CD4-positive, alpha-beta T cell (primary cell): ENCODE measurements at regions of chr5 and their contacts with region 1.

Region 1: GRCh38 chr5:15003511-15003920 is 131.9 kb upstream of the ANKH start:
- DNase-seq: peak; percentile 23 to 84 (median 40)
- ATAC-seq: peak; percentile 100
- H3K4me3 ChIP-seq: no peak overlapping the region
- H3K4me3 Mint-ChIP-seq: no peak overlapping the region
- H3K27ac ChIP-seq: no peak overlapping the region
- H3K27ac Mint-ChIP-seq: no peak overlapping the region
- H3K4me1 ChIP-seq: no peaks in the 10 kb centered on the region
- H3K4me1 Mint-ChIP-seq: peaks cover 6% of the 10 kb centered on the region
- H3K27me3 ChIP-seq: no peaks in the 10 kb centered on the region
- H3K27me3 Mint-ChIP-seq: no peaks in the 10 kb centered on the region
- CTCF ChIP-seq: peak; percentile 81

Region 2: DNA sequence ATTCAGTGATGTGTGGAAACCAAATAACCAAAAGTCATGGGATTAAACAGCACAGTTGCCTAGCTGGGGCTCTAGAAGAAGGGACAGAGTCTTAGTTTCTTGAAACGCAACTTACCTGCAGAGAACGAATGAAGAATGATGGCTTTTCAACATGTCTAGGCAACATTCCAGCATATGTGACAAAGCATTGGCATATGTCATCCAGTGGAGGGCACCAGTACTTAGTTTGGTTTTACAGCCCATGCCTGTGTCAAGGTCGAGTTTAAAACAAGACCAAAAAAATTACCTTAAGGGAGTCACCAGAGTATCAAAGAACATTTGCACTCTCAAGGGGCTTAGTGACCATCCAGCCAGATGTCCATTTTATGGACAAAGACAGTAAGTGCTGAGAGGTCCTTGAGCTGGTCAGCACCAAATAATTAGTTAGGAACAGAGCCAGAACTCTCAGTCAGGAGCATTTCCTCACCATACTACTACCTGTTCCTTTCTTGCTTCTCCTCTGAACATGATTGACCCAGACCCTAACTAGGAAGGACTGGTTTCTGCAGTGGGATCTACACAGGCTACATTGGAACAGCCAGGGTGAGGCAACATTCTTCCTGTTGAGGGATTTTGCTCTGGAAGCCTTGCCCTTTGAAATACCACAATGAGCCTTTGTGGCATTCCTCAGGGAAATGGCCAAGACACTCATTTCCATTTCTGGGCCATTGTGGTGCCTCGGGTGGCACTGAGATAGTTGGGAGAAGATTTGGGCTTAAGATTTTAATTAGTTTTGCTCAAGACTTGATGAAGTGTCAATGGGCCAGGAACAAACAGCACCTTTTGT is 56.5 kb before region 1 on chr5:
- CTCF ChIA-PET with region 1: interaction called, 12 read pairs
- POLR2A ChIA-PET with region 1: no interaction called
- intact Hi-C with region 1: loop called (anchors 1 to 2 kb)
- DNase-seq: peak in 11 of 14 experiments; percentile 7 to 79 (median 25)
- ATAC-seq: peak; percentile 99
- H3K4me3 ChIP-seq: no peak overlapping the region
- H3K4me3 Mint-ChIP-seq: no peak overlapping the region
- H3K27ac ChIP-seq: no peak overlapping the region
- H3K27ac Mint-ChIP-seq: no peak overlapping the region
- H3K4me1 ChIP-seq: no peaks in the 10 kb centered on the region
- H3K4me1 Mint-ChIP-seq: peaks cover 8% of the 10 kb centered on the region
- H3K27me3 ChIP-seq: no peaks in the 10 kb centered on the region
- H3K27me3 Mint-ChIP-seq: peaks cover 14% of the 10 kb centered on the region
- CTCF ChIP-seq: peak; percentile 58

Region 3: GRCh38 chr5:14958196-14958595 is 45.3 kb before region 1 on chr5:
- CTCF ChIA-PET with region 1: interaction called, 22 read pairs
- POLR2A ChIA-PET with region 1: interaction called, 6 read pairs
- intact Hi-C with region 1: loop called (anchors 1 to 2 kb)
- DNase-seq: no peak
- ATAC-seq: no peak
- H3K4me3 ChIP-seq: no peak overlapping the region
- H3K4me3 Mint-ChIP-seq: no peak overlapping the region
- H3K27ac ChIP-seq: no peak overlapping the region
- H3K27ac Mint-ChIP-seq: no peak overlapping the region
- H3K4me1 ChIP-seq: peaks cover 2% of the 10 kb centered on the region
- H3K4me1 Mint-ChIP-seq: no peaks in the 10 kb centered on the region
- H3K27me3 ChIP-seq: no peaks in the 10 kb centered on the region
- H3K27me3 Mint-ChIP-seq: no peaks in the 10 kb centered on the region
- CTCF ChIP-seq: no peak